Right cardiac atrium (tissue), 5 donors: ENCODE measurements at regions of chr13 and their contacts with region 1.

Region 1: DNA sequence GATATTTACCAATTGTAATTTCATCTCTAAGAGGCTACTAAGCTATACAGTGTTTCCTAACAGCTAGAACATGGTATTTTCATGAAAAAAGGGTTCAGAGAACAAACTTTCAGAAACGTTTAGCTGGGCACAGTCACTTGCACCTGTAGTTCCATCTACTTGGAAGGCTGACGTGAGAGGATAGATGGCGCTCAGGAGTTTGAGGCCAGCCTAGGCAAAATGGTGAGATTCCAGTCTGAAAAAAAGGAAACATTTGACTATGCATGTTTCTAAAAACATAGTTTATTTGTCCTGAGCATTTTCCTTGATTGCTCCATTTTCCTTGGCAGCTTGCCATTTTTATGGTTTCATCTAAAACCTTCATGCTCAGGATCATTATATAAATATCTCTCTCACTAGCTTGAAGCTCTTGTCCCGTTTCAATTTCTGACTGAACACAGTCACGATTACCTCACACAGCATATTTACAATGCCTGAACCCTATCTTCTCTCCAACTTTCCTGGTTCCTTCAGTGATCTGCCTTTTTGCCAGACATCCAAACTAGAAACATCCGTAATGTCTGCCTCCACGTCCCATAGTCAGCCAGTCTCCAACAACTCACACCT is 200.8 kb downstream of the RGCC start:
- DNase-seq: no peak
- ATAC-seq: no peak
- H3K4me3 ChIP-seq: no peak overlapping the region
- H3K27ac ChIP-seq: no peak overlapping the region
- H3K4me1 ChIP-seq: no peaks in the 10 kb centered on the region
- H3K27me3 ChIP-seq: no peaks in the 10 kb centered on the region

Region 2: GRCh38 chr13:41411522-41411921 is 246.6 kb before region 1 on chr13:
- intact Hi-C with region 1: loop called in 2 of 4 experiments (anchors 5 kb)
- DNase-seq: no peak
- ATAC-seq: peak; percentile 52 to 54
- H3K4me3 ChIP-seq: no peak overlapping the region
- H3K27ac ChIP-seq: no peak overlapping the region
- H3K4me1 ChIP-seq: no peaks in the 10 kb centered on the region
- H3K27me3 ChIP-seq: no peaks in the 10 kb centered on the region

Region 3: GRCh38 chr13:42894765-42895243 is 1236.6 kb after region 1 on chr13:
- intact Hi-C with region 1: no loop called
- DNase-seq: no peak
- ATAC-seq: no peak
- H3K4me3 ChIP-seq: no peak overlapping the region
- H3K27ac ChIP-seq: no peak overlapping the region
- H3K4me1 ChIP-seq: no peaks in the 10 kb centered on the region
- H3K27me3 ChIP-seq: no peaks in the 10 kb centered on the region